Pancreas (tissue), 10 donors: ENCODE measurements at regions of chr9 and their contacts with region 1.

Region 1: DNA sequence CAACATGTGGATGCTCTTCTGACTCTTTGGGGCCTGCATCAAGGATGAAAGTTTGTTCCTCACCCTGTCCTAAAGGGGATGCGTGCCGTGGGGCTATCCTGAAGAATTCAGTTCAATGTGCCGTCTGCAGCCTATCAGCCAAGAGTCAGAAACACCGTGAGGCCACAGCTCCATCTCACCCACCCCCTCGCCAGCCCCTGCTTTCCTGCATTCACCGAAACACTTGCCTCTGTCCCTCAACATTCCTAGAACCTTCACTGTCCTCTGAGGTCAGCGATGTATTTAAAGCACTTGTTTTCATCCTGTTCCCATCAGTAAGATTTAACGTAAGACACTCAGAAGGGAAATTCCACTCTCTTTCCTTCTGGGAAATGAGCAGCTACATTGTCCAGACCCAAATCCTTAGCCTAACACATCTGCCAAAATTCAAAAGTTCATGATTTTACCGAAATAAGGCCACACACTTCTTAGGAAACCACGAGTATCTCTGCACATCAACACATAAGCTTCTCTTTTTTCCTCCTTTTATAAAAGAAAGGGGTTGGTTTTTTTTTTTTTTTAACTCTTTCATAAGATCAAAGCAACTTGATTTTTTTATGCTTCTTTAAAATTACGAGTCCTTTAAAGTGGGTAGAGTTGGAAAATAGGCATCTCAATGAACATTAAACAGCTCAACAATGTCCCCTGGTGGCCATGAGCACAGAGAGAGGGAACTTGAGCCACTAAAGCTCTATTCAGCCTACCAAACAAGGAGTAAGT is 100.7 kb downstream of the SUSD1 start:
- DNase-seq: peak in 4 of 6 donors; percentile 40 to 70 (median 56)
- ATAC-seq: peak; percentile 79 to 91 (median 89)
- H3K4me3 ChIP-seq: no peak overlapping the region
- H3K27ac ChIP-seq: peak overlapping the region in 3 of 4 donors; percentile 22 to 72 (median 70)
- H3K4me1 ChIP-seq: peaks cover 0 to 14% (median 0%) of the 10 kb centered on the region in 3 donors
- H3K27me3 ChIP-seq: no peaks in the 10 kb centered on the region
- CTCF ChIP-seq: peak; percentile 27 to 81 (median 72)

Region 2: DNA sequence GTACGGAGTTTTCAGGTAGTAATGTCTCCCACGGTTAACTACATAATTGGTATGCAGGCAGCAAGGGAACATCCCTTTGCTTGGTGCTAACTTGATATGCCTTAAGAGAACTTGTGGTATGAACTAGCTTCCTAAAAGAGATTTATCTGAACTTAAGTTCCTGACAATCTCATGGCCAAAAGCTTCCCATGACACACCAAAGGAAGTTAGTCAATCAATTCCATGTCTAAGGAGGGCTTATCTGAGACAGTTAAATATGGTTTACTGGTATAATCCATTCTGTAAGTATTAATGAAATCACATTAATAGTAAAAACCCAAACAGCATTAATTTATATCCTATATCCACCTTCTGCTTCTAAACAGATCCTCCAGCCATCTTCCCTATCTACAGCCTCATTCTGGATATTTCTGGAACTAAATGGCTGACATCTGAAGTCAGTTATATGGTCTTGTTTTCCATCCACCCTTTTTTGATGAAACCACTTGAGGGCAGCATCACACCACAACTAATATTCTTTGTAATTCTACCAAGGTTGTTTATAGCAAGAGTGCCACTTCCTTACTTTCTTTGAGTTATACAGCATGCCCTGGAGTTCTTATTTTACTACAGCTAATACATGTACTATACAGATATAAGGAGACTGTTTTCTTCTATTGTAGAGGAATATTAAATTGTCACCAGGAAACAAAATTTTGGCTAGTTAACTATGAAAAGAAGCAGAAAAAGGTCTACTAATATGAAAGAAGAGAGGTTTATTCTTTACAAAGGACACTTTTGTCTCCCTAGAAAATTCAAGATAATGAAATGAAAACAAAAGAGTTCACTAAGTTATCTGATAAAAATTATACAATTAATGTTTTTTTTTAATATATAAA is 314.4 kb before region 1 on chr9:
- intact Hi-C with region 1: loop called in 2 of 3 experiments (anchors 10 kb)
- DNase-seq: peak in 3 of 6 donors; percentile 17 to 66 (median 30)
- ATAC-seq: peak; percentile 74 to 99 (median 96)
- H3K4me3 ChIP-seq: no peak overlapping the region
- H3K27ac ChIP-seq: peak overlapping the region in 1 of 4 donors; percentile 35
- H3K4me1 ChIP-seq: no peaks in the 10 kb centered on the region
- H3K27me3 ChIP-seq: no peaks in the 10 kb centered on the region
- CTCF ChIP-seq: peak; percentile 21 to 53 (median 43)

Region 3: GRCh38 chr9:112020680-112021596 is 53.5 kb before region 1 on chr9:
- intact Hi-C with region 1: loop called in 2 of 3 experiments (anchors 5 to 10 kb)
- DNase-seq: no peak
- ATAC-seq: peak; percentile 67 to 87 (median 84)
- H3K4me3 ChIP-seq: no peak overlapping the region
- H3K27ac ChIP-seq: peak overlapping the region; percentile 35 to 80 (median 58)
- H3K4me1 ChIP-seq: peaks cover 0 to 17% (median 11%) of the 10 kb centered on the region in 3 donors
- H3K27me3 ChIP-seq: no peaks in the 10 kb centered on the region
- CTCF ChIP-seq: no peak

Region 4: DNA sequence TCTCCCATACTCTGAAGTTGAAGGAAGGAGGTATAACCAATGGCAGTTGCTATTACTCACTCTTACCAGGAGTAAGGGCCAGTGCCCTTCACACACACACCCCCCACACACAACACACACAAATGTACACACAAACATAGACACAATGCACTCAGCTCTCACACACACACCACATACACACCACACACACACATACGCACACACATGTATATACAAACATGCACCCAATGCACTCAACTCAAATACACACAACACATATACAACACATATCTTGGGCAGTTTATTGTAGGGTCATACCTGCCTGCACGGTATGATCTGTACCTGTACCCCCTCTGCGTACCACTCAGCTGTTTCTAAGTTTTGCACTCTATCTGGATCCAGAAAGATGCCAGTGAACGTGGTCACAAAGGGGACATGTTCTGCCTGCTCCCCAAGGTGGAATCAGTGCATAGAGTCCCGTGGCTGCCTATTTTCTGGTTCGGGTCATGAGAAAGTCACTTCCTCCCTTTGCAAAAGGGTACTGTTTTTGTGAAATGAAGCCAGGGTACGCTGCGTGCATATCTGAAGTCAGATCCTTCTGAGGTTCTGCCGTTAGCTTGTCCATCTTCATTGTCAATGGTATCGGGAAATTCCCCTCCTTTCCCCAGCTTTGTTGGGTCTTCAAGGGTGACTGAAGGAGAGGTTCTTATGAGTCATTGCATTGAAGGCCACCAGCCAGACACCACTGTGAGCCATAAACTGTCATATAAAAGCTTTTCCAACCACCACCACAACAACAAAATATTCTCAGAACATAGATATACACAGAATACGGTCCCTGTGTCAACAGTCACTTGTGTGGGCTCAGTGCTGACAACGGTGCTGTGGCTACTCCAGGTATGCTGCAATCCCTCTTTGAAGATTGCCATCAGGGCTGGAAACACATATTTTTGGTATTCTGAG is 45.9 kb before region 1 on chr9:
- intact Hi-C with region 1: loop called in 2 of 3 experiments (anchors 5 to 10 kb)
- DNase-seq: no peak
- ATAC-seq: no peak
- H3K4me3 ChIP-seq: no peak overlapping the region
- H3K27ac ChIP-seq: no peak overlapping the region
- H3K4me1 ChIP-seq: peaks cover 0 to 23% (median 5%) of the 10 kb centered on the region in 3 donors
- H3K27me3 ChIP-seq: no peaks in the 10 kb centered on the region
- CTCF ChIP-seq: no peak